Psoas muscle (tissue), 8 donors: ENCODE measurements at regions of chr17 and their contacts with region 1.

Region 1: DNA sequence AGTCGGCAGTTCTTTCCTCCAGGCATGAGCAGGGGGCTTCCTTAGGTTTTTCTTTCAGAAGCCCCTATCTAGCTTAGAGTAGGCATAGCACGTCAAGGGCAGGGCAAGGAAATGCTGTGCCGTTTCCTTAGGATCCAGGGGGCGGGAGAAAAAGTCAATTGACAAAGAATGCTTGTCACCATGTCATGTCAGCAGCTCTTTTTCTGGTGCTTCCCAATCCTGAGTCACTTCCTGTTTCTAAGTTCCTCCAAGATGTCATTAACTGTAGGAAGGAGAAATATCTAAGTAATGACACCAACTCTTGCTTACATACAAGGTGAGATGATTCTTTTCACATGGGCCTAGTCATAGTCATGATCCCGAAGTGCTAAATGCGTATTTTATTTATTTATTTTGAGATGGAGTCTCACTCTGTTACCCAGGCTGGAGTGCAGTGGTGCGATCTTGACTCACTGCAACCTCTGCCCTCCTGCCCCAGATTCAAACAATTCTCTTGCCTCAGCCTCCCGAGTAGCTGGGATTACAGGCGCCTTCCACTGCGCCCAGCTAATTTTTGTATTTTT is 35.2 kb downstream of the GJC1 start:
- DNase-seq: no peak
- ATAC-seq: peak; percentile 57 to 70 (median 60)
- H3K4me3 ChIP-seq: no peak overlapping the region
- H3K27ac ChIP-seq: peak overlapping the region; percentile 65
- H3K4me1 ChIP-seq: peaks cover 10% of the 10 kb centered on the region
- H3K27me3 ChIP-seq: no peaks in the 10 kb centered on the region
- CTCF ChIP-seq: no peak

Region 2: DNA sequence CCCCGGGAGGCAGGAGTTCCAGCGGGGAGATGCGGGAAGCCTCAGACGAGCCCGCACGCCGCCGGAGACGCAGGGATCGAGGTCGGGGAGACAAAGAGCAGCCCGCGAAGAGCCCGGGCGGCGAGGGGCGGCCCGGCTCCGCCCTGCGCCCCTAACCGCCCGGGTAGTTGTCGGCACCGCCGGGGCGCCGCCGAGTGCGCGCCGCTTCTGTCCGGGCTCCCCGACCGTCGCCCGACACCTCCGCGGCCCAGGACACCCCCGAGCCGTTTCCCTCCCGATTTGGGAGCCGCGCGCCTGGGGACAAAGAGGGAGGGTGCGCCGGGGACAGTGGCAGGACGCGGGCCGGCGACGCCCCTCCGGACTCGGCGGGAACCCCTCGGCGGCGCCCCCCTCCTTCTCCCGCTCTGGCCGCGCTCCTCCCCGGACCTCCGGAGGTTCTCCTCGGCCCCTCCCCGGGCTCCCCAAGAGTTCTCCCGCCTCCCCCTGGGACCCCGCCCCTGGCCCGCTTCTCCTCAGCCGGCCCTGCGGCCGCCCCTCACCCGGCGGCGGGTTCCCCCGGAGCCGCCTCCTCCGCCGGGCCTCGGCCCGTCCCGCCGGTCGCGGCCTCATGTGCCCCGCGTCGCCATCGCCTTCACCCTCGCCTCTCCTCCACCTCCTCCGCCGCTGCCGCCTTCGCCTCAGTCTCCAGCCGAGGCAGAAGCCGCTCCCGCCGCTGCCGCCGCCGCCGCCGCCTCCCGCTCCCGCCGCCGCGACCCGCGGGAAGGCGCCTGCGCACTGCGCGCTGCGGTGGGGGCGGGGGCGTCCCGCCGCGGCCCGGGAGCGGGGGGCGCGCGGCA is 34.8 kb after region 1 on chr17 and contains the start of gene GJC1:
- intact Hi-C with region 1: loop called in 1 of 2 experiments (anchors 5 kb)
- DNase-seq: peak in 1 of 2 donors; percentile 56
- ATAC-seq: peak in 1 of 4 donors; percentile 38
- H3K4me3 ChIP-seq: peak within 1 kb of the TSS; percentile 68
- H3K27ac ChIP-seq: peak within 1 kb of the TSS; percentile 46
- H3K4me1 ChIP-seq: no peaks in the 10 kb centered on the region
- H3K27me3 ChIP-seq: peaks cover 4 to 84% (median 19%) of the 10 kb centered on the region in 3 donors
- CTCF ChIP-seq: no peak
- total RNA-seq, gene GJC1: 4.7 to 7.9 (median 5.7) TPM